Head of caudate nucleus (tissue), 42 donors: ENCODE measurements at regions of chr11 and their contacts with region 1.

Region 1: GRCh38 chr11:44564670-44565210 is 723 bp upstream of the CD82 start:
- DNase-seq: peak in 20 of 42 donors; percentile 26 to 85 (median 48)

Region 2: GRCh38 chr11:44905131-44905866 is 340.6 kb after region 1 on chr11:
- intact Hi-C with region 1: loop called (anchors 5 kb)
- DNase-seq: no peak